Uterus (tissue), 4 donors: ENCODE measurements at regions of chr6 and their contacts with region 1.

Region 1: GRCh38 chr6:132218059-132218696 is 183.1 kb downstream of the MOXD1 start:
- DNase-seq: no peak
- H3K4me3 ChIP-seq: no peak overlapping the region
- H3K27ac ChIP-seq: no peak overlapping the region
- H3K4me1 ChIP-seq: no peaks in the 10 kb centered on the region
- H3K27me3 ChIP-seq: no peaks in the 10 kb centered on the region
- CTCF ChIP-seq: peak in 3 of 4 experiments; percentile 27 to 66 (median 63)
- POLR2A ChIP-seq: no peak

Region 2: DNA sequence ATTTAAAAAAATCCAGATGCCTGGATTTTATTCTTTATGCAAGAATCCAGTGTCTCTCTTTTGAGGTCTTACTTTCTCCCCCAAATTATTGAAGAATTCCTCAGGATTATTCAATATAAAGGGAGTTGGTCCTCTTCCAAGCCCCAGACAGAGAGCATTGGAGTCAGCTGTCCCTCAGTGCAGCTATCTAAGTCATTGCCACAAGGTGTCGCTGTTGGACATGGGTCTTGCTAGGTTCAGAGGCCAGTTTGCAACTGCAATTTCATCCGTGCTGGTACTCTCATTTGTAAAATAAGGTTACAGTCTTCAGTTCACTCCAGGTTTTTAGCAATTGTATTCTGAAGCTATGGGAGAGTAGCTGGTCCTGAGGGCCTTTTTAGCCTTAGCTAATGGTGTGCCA is 294.8 kb before region 1 on chr6:
- intact Hi-C with region 1: loop called (anchors 10 kb)
- DNase-seq: peak; percentile 51 to 67
- H3K4me3 ChIP-seq: no peak overlapping the region
- H3K27ac ChIP-seq: no peak overlapping the region
- H3K4me1 ChIP-seq: no peaks in the 10 kb centered on the region
- H3K27me3 ChIP-seq: no peaks in the 10 kb centered on the region
- CTCF ChIP-seq: peak; percentile 40 to 63 (median 50)
- POLR2A ChIP-seq: no peak